SK-N-SH (cell line): ENCODE measurements at regions of chr10 and their contacts with region 1.

Region 1: DNA sequence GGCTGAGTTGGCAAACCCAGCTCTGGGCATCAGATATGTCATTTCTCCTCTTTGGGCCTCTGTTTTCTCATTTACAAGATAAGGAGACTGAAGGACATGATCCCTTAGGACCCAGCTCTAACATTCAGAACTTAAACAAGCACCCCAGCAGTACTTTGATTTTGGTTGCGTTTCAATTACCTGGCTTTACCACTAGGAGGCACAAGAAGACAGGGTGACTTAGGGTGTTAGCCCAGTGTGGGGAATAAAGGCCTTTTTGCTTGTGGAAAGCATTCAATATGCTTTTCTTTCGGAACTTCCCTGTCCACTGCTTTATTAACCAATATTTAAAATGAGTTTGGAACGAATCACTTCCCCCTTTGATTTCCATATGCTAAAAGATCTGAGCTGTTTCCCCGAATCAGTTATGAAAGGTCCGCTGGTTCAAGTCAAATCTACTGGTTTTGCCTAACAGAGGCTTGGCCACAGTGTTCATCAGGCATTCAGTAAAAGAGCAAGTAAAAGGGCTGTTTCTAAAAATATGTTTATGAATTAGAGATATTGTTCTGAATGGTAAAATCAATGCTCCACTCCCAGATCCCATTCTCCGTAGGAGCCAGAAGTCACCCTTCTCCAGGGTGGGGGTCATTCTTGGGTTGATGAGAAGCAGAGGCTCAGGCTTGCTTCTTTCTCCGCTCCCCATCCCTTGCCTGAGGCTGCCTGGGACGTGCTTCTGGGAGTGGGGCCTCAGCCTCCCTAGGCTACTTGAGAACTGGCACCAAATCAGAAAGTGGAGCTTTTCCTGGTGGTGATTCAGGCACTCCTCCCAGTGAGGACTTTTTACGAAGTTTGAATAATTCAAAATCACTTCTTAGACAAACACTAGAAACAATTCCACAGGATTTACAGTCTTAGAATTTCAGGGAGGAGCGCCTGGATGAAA is 105.5 kb downstream of the MYOF start:
- DNase-seq: peak; percentile 72
- H3K4me3 ChIP-seq: no peak overlapping the region; a peak in 1 of 4 replicates
- H3K27ac ChIP-seq: peak overlapping the region; percentile 55 to 89
- H3K4me1 ChIP-seq: peaks cover 3 to 42% of the 10 kb centered on the region in 2 experiments
- H3K27me3 ChIP-seq: no peaks in the 10 kb centered on the region
- CTCF ChIP-seq: peak; percentile 95
- EP300 ChIP-seq: no peak
- RAD21 ChIP-seq: peak; percentile 98

Region 2: GRCh38 chr10:93095225-93095624 is 281.4 kb before region 1 on chr10:
- CTCF ChIA-PET with region 1: no interaction called
- POLR2A ChIA-PET with region 1: no interaction called
- DNase-seq: no peak
- H3K4me3 ChIP-seq: no peak overlapping the region
- H3K27ac ChIP-seq: no peak overlapping the region
- H3K4me1 ChIP-seq: no peaks in the 10 kb centered on the region
- H3K27me3 ChIP-seq: no peaks in the 10 kb centered on the region
- CTCF ChIP-seq: no peak
- EP300 ChIP-seq: no peak
- RAD21 ChIP-seq: no peak

Region 3: DNA sequence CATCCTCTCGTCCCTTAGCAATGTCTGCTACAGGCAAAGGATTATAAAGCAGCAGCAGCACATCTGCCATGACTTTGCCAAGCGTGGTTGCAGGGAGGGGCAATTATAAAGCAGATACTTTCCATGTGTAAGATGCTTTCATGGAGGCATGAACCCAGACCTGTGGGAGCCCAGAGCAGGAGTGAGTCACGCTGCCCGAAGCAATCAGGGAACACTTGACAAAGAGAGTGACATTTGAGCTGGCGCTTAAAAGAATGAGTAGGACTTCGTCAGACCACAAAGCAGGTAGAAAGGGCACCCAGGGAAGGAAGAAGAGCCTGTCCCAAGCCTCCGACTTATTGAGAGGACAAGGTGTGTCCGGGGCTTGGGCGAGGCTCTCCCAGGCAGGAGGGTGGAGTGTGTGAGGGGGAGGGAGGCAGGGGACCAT is 41.7 kb before region 1 on chr10:
- CTCF ChIA-PET with region 1: no interaction called
- POLR2A ChIA-PET with region 1: no interaction called
- DNase-seq: no peak
- H3K4me3 ChIP-seq: no peak overlapping the region
- H3K27ac ChIP-seq: no peak overlapping the region
- H3K4me1 ChIP-seq: no peaks in the 10 kb centered on the region; a peak in 1 of 4 replicates
- H3K27me3 ChIP-seq: no peaks in the 10 kb centered on the region
- CTCF ChIP-seq: no peak
- EP300 ChIP-seq: no peak
- RAD21 ChIP-seq: no peak

Region 4: DNA sequence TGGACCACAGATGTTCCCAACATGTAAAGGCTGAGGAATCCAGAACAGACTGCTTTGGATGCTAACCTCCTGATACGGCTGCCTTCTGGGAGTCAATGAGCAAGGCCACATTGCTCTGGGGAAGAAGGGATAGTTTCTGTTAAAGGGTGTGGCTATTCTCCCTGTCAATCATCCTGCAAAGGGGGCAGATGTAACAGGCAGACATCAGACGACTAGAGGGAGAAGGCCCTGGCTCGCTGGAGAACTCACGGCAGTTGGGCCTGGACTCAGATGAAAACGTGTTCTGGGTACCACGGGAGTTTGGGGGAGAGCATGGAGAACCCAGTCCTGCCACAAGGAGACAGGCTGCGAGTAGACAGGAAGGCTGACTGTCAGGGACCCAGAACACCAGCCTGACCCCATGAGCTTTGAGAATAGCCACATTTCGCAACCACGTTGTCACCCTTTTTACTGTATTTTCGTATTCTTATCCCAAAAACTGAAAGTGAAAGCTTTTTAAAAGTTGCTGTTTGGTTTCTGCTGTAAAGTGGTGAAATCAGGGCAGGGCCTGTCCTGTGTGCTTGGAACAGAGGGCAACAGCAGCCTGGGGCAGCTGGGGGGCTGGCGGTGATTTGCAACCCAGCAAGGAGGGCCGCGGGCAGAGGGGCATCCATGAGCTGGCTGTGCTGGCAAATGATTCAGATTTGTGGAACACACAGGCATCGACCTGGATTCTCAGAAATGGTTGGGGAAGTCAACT is 10.2 kb after region 1 on chr10:
- CTCF ChIA-PET with region 1: interaction called, 49 read pairs
- POLR2A ChIA-PET with region 1: no interaction called
- DNase-seq: no peak
- H3K4me3 ChIP-seq: no peak overlapping the region
- H3K27ac ChIP-seq: peak overlapping the region in 1 of 2 experiments; percentile 96; a peak in 1 of 4 replicates
- H3K4me1 ChIP-seq: peaks cover 0 to 20% of the 10 kb centered on the region in 2 experiments; a peak in 3 of 4 replicates
- H3K27me3 ChIP-seq: no peaks in the 10 kb centered on the region
- CTCF ChIP-seq: no peak
- EP300 ChIP-seq: no peak
- RAD21 ChIP-seq: no peak

Region 5: DNA sequence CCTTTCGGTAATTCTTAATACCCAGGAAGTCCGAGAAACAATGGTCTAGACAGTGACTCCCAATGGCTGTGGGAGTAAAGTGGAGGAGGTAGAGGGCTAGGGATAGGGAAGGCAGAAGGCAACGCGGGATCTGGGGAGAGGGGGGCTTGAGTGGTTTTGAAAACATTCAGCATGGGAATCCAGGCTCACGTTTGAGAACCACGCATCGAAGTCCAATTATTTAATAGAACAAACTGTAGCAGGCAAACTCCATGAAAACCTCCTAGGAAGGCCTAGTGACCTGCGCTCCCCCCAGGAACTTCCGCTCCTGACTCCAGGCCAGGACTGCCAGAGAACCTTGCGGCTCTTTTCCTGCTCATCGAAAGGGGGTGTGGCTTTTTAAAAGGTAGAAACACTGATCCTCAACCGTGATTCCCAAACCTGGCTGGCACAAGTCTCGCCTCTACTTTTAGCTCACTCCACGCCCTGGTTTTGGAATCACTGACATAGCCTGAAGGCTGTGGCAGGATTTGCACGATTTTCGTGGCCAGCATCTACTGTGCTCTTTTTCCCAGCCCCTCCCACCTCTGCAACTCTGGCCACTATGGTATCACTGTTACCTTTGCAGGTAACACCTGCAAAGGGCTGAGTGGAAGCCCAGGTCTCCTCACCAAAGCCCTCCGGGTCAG is 62.1 kb after region 1 on chr10:
- CTCF ChIA-PET with region 1: interaction called, 14 read pairs
- POLR2A ChIA-PET with region 1: no interaction called
- DNase-seq: no peak
- H3K4me3 ChIP-seq: no peak overlapping the region
- H3K27ac ChIP-seq: peak overlapping the region in 1 of 2 experiments; percentile 100; a peak in 3 of 4 replicates
- H3K4me1 ChIP-seq: peaks cover 14 to 62% of the 10 kb centered on the region in 2 experiments
- H3K27me3 ChIP-seq: no peaks in the 10 kb centered on the region
- CTCF ChIP-seq: no peak
- EP300 ChIP-seq: no peak
- RAD21 ChIP-seq: no peak

Region 6: DNA sequence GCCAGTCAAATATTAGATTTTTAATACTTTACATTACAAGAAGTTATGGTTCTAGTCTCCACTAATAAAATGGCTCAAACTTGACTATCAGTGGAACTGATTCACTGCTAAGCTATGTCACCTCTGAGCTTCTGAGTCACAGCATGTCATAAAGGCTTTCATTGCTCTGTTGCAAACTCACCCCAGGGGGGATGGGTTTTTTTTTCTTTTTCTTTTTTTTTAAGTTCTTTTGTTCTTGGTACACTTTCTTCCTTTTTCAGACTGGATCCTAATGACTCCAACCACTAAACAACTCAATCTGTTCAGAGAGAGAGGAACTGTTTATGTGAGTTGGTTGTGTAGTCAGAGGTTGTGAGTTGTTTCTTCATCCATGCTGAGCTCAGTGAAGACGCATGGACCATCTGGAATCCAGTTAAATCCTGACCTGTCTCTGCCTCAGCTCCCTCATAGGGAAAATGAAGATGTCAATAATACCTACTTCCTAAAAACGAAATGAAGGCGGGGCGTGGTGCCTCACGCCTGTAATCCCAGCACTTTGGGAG is 94.5 kb after region 1 on chr10:
- CTCF ChIA-PET with region 1: interaction called, 92 read pairs
- POLR2A ChIA-PET with region 1: no interaction called
- DNase-seq: no peak
- H3K4me3 ChIP-seq: no peak overlapping the region
- H3K27ac ChIP-seq: peak overlapping the region; percentile 54 to 99; a peak in 3 of 4 replicates
- H3K4me1 ChIP-seq: peaks cover 14 to 62% of the 10 kb centered on the region in 2 experiments; a peak in 3 of 4 replicates
- H3K27me3 ChIP-seq: no peaks in the 10 kb centered on the region
- CTCF ChIP-seq: no peak
- EP300 ChIP-seq: peak in 1 of 2 experiments; percentile 95; a peak in 2 of 4 replicates
- RAD21 ChIP-seq: no peak

Region 7: DNA sequence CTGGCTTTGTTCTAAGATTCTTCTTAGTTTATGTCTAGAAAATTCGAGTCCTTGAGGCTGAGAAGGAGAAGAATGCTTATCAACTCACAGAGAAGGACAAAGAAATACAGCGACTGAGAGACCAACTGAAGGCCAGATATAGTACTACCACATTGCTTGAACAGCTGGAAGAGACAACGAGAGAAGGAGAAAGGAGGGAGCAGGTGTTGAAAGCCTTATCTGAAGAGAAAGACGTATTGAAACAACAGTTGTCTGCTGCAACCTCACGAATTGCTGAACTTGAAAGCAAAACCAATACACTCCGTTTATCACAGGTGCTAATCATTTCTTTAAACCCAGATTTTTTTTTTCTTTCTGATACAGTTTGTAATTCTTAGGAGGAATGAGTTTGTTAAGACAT is 126.4 kb after region 1 on chr10:
- CTCF ChIA-PET with region 1: interaction called, 32 read pairs
- POLR2A ChIA-PET with region 1: no interaction called
- DNase-seq: no peak
- H3K4me3 ChIP-seq: no peak overlapping the region
- H3K27ac ChIP-seq: 0 out of 4 replicates have a peak overlapping the region, but pooled peaks of 1 of the 2 experiments have one; percentile 8
- H3K4me1 ChIP-seq: peaks cover 0 to 4% of the 10 kb centered on the region in 2 experiments; a peak in 3 of 4 replicates
- H3K27me3 ChIP-seq: no peaks in the 10 kb centered on the region
- CTCF ChIP-seq: no peak
- EP300 ChIP-seq: no peak
- RAD21 ChIP-seq: no peak

Region 8: DNA sequence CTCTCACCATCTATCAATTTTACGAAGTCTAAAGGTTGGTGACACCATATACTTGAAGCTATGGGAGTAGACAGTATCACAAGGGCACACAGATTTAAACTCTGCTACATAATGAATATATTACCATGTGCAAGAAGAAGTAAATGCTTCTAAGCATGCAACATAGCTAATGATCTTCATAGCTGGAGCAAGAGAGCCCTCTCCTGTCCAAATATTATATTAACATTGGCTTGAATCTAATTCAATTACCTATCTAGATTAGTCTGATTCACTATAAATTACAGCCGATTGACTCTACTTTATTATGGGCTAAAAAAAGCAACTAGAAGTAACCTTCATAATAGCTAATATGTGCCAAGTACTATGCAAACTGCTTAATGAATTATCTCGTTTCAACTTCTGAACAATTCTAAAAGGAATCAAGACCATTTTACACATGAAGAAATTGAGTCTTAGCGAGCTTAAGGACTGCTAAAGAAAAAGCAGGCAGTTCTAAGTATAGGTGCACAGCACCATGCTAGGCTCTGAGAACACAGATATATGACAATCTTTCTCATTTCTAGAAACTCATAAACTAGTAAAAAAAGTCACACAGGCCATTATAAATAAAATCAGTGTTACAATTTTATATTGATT is 303.9 kb after region 1 on chr10:
- CTCF ChIA-PET with region 1: interaction called, 10 read pairs
- POLR2A ChIA-PET with region 1: no interaction called
- DNase-seq: peak; percentile 12
- H3K4me3 ChIP-seq: no peak overlapping the region
- H3K27ac ChIP-seq: no peak overlapping the region
- H3K4me1 ChIP-seq: no peaks in the 10 kb centered on the region
- H3K27me3 ChIP-seq: no peaks in the 10 kb centered on the region
- CTCF ChIP-seq: peak; percentile 66
- EP300 ChIP-seq: no peak
- RAD21 ChIP-seq: peak; percentile 78